ENCODE measurements at regions of chr1 and their contacts with region 1.

Region 1: DNA sequence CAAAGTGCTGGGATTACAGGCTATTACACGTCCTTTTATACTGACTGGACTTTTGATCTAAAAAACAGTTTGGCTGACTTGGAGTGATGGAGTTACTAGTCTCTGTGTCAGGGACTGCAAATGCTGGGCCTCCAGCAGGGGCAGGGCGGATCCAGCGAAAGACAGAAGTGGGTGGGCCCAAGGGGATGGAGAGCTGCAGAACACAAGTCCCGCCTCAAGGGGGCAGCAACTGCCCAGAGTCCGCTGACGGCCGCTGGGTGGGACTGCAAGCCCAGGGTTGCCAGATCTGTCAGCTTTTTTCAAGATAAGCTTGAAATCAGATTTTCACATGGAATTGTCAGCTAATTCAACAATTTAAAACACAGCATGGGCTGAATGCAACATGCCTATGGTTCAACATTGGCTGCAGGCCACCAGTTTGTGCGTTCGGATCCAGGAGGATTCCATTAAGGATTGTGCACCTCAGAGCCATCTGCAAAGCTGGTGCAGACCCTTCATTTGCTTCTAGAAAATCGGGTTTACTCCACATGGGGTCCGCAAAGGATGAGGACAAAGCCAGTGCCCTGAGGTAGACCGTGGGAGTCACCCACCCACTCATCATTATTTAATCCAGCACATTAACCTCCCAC is 10.7 kb downstream of the STMN1 start:
- DNase-seq: peak; percentile 95
- H3K4me3 ChIP-seq: no peak overlapping the region; a peak in 1 of 4 replicates
- H3K27ac ChIP-seq: peak overlapping the region; percentile 64 to 69
- H3K4me1 ChIP-seq: peaks cover 15 to 33% of the 10 kb centered on the region in 2 experiments; a peak in 3 of 4 replicates
- H3K27me3 ChIP-seq: no peaks in the 10 kb centered on the region
- CTCF ChIP-seq: peak; percentile 98
- EP300 ChIP-seq: peak in 1 of 2 experiments; percentile 81; a peak in 2 of 4 replicates
- RAD21 ChIP-seq: peak; percentile 99

Region 2: DNA sequence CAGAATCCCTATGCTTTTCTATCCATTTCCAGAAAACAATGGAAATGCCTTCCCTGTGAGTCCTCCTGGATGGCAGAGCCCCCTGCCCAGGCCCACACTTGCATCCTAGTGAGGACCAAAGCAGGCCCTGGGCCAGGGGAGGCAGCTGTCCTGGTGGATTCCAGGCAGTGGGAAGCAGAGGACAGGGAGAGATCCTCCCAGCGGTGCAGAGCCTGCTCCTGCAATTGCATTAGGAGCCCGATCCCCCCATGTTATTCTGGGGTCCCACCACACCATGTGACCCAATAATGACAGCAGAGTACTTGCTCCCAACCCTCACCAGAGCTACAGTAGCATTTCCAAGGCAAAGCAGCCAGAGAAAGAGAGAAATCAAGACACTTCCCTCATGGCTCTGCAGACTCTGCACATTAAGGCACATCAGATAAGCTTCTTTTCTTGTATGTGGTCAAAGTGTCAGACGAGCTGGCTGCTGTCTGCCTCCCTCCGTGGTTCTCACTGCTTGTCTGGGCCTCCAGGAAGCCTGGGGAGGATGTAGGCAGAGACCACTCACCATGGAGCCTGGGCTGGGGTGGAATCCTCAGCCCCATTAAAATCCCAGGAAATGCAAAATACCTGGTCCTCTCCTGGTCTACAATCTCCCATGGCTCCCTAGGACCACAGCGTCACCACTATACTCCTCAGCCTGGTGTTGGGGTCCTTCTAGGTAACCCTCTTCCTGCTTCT is 910.5 kb before region 1 on chr1:
- CTCF ChIA-PET with region 1: no interaction called
- POLR2A ChIA-PET with region 1: no interaction called
- DNase-seq: no peak
- H3K4me3 ChIP-seq: no peak overlapping the region
- H3K27ac ChIP-seq: no peak overlapping the region
- H3K4me1 ChIP-seq: no peaks in the 10 kb centered on the region; a peak in 1 of 4 replicates
- H3K27me3 ChIP-seq: peaks cover 19% of the 10 kb centered on the region
- CTCF ChIP-seq: no peak
- EP300 ChIP-seq: no peak
- RAD21 ChIP-seq: no peak

Region 3: DNA sequence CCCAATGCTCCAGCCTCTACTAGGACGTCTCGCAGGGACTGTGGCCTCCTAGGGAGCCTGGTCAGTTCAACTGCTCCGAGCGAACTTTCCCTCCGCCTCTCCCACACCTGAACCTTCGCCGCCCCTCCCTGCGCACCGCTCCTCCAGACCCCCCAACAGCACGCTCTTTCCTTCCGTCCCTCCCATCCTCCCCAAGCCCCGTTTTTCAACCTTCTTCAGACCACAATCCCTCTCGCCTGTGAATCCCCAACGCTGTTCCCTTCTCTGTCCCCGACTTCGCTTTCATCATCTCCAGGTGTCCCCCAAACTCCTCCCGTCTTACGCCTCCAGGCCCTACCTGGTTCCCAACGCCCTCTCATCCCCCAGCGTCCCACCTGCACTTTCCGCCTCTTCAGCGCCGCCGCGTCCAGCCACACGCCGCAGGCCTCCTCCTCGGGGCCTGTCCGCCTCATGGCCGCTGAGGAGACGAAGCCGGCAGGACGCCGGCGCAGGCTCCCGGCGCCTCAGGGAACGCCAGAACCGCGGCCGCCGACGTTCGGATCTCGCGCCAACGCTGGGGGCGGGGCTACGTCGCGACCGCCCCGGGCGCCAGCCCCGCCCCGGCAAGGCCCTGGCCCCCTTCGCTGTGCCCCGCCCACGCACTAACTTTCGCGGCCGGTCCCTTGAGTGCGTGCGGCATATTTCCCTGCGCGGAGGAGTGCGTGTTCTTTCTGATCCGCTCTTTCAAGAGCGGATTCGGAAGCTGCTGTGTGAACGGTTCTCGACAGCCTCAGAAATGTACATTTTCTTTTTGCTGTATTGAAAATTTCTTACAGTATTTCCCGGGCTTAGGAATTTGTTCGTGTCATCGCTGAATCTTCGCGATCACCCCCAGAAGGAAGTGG is 36.3 kb before region 1 on chr1 and contains the start of gene AUNIP:
- CTCF ChIA-PET with region 1: no interaction called
- POLR2A ChIA-PET with region 1: no interaction called
- DNase-seq: peak; percentile 98
- H3K4me3 ChIP-seq: peak within 1 kb of the TSS; percentile 64 to 65
- H3K27ac ChIP-seq: peak within 1 kb of the TSS; percentile 51 to 66
- H3K4me1 ChIP-seq: peaks cover 0 to 6% of the 10 kb centered on the region in 2 experiments; a peak in 1 of 4 replicates
- H3K27me3 ChIP-seq: no peaks in the 10 kb centered on the region
- CTCF ChIP-seq: no peak
- EP300 ChIP-seq: 0 out of 4 replicates have a peak, but pooled peaks of 1 of the 2 experiments have one; percentile 26
- RAD21 ChIP-seq: no peak
- polyA plus RNA-seq, gene AUNIP: 1.9 TPM in 2 replicates

Region 4: GRCh38 chr1:25927521-25928265 is 32.2 kb after region 1 on chr1:
- CTCF ChIA-PET with region 1: interaction called, 22 read pairs
- POLR2A ChIA-PET with region 1: interaction called, 5 read pairs
- DNase-seq: peak; percentile 74
- H3K4me3 ChIP-seq: no peak overlapping the region
- H3K27ac ChIP-seq: peak overlapping the region in 1 of 2 experiments; percentile 98; a peak in 2 of 4 replicates
- H3K4me1 ChIP-seq: peaks cover 0 to 24% of the 10 kb centered on the region in 2 experiments; a peak in 1 of 4 replicates
- H3K27me3 ChIP-seq: no peaks in the 10 kb centered on the region
- CTCF ChIP-seq: no peak
- EP300 ChIP-seq: no peak
- RAD21 ChIP-seq: no peak

Region 5: GRCh38 chr1:25952841-25953401 is 57.4 kb after region 1 on chr1:
- CTCF ChIA-PET with region 1: interaction called, 15 read pairs
- POLR2A ChIA-PET with region 1: no interaction called
- DNase-seq: peak; percentile 46
- H3K4me3 ChIP-seq: no peak overlapping the region
- H3K27ac ChIP-seq: peak overlapping the region in 1 of 2 experiments; percentile 87; a peak in 2 of 4 replicates
- H3K4me1 ChIP-seq: peaks cover 6 to 14% of the 10 kb centered on the region in 2 experiments; a peak in 2 of 4 replicates
- H3K27me3 ChIP-seq: no peaks in the 10 kb centered on the region
- CTCF ChIP-seq: no peak
- EP300 ChIP-seq: 0 out of 4 replicates have a peak, but pooled peaks of 1 of the 2 experiments have one; percentile 10
- RAD21 ChIP-seq: no peak

Region 6: GRCh38 chr1:25990702-25991395 is 95.4 kb after region 1 on chr1:
- CTCF ChIA-PET with region 1: interaction called, 344 read pairs
- POLR2A ChIA-PET with region 1: interaction called, 6 read pairs
- DNase-seq: no peak
- H3K4me3 ChIP-seq: no peak overlapping the region
- H3K27ac ChIP-seq: no peak overlapping the region
- H3K4me1 ChIP-seq: peaks cover 0 to 6% of the 10 kb centered on the region in 2 experiments; a peak in 2 of 4 replicates
- H3K27me3 ChIP-seq: no peaks in the 10 kb centered on the region
- CTCF ChIP-seq: no peak
- EP300 ChIP-seq: no peak
- RAD21 ChIP-seq: no peak

Region 7: DNA sequence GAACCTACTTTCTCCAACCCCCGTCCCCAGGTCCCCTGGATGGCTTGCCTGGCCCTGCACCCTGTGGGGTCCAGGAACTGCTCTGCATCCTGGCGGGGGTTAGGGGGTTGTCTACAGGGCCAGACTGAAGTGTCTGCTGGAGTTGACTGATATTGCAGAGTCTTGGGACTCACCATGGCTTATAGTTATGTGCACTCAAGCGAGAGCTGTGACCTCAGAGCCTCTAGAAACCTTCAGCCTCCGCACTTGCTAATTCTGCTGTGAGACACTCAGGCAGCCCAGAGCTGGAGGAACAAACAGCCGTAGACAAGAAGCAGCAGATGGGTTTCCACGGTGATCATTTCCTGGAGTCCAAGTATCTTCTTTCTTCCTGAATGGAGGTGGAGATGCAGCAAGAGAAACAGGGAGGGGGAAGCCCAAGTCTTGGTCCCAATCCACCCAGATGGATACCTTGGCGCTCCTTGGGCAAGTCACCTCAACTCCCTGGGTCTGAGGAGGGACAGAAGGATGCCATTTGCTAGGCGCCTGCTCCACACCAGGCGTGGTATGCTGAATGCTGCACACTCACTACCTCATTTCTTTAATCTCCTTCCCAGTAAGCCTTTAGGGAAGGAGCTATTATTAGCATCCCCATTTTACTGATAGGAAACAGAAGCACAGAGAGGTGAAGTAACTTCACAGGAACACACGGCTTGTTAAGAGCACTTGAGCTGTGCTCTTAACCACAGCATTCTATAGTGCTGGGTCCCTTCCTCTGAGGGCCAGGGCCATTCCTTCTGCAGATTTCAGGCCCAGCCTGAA is 121.1 kb after region 1 on chr1:
- CTCF ChIA-PET with region 1: interaction called, 11 read pairs
- POLR2A ChIA-PET with region 1: interaction called, 3 read pairs
- DNase-seq: no peak
- H3K4me3 ChIP-seq: no peak overlapping the region
- H3K27ac ChIP-seq: no peak overlapping the region
- H3K4me1 ChIP-seq: peaks cover 8 to 31% of the 10 kb centered on the region in 2 experiments; a peak in 2 of 4 replicates
- H3K27me3 ChIP-seq: no peaks in the 10 kb centered on the region
- CTCF ChIP-seq: no peak
- EP300 ChIP-seq: no peak
- RAD21 ChIP-seq: no peak

Region 8: GRCh38 chr1:26035959-26036755 is 140.7 kb after region 1 on chr1:
- CTCF ChIA-PET with region 1: interaction called, 13 read pairs
- POLR2A ChIA-PET with region 1: interaction called, 4 read pairs
- DNase-seq: peak; percentile 95
- H3K4me3 ChIP-seq: peak overlapping the region; percentile 87 to 99
- H3K27ac ChIP-seq: peak overlapping the region in 1 of 2 experiments; percentile 69; a peak in 1 of 4 replicates
- H3K4me1 ChIP-seq: peaks cover 0 to 12% of the 10 kb centered on the region in 2 experiments; a peak in 1 of 4 replicates
- H3K27me3 ChIP-seq: peaks cover 5% of the 10 kb centered on the region; the same call in 1 of the 2 replicates
- CTCF ChIP-seq: peak; percentile 95
- EP300 ChIP-seq: no peak
- RAD21 ChIP-seq: peak; percentile 84